Heart right ventricle (tissue), 16 donors: ENCODE measurements at regions of chr9 and their contacts with region 1.

Region 1: GRCh38 chr9:24616863-24617262 is 71.2 kb upstream of the IZUMO3 start:
- DNase-seq: no peak
- ATAC-seq: no peak
- H3K4me3 ChIP-seq: no peak overlapping the region
- H3K27ac ChIP-seq: no peak overlapping the region
- H3K4me1 ChIP-seq: no peaks in the 10 kb centered on the region
- H3K27me3 ChIP-seq: no peaks in the 10 kb centered on the region
- CTCF ChIP-seq: no peak

Region 2: GRCh38 chr9:24561957-24562356 is 54.9 kb before region 1 on chr9:
- intact Hi-C with region 1: loop called in 1 of 10 experiments (anchors 10 kb)
- DNase-seq: no peak
- ATAC-seq: no peak
- H3K4me3 ChIP-seq: no peak overlapping the region
- H3K27ac ChIP-seq: no peak overlapping the region
- H3K4me1 ChIP-seq: no peaks in the 10 kb centered on the region
- H3K27me3 ChIP-seq: no peaks in the 10 kb centered on the region
- CTCF ChIP-seq: no peak

Region 3: DNA sequence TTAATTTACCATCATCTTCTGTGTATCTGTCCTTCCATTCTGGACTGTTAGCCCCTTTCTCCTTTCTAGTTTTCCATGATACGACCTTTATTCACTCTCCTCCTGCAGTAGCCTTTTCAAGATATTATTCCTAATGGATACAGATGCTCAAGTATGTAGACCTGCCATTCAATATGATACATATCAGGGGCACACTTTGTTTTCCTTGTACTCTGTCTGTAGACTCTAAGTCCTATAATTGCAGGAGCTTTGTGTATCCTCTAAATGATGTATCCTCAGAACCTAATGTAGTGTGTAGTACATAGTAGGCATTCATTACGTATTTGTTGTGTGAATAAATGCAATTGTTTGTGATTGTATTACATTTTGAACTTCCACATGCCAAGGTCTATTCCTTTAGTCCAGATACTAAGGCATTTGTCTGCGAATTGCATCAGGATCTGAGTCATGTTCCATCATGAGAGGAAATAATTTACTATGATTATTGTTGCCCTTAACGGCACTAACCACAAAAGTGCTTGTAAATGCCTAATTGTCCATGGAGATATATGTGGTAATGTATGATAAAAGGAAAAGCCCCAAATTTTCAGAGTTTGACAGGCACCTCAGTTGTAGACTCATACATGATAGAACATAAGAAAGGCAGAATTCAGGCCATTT is 14.0 kb before region 1 on chr9:
- intact Hi-C with region 1: loop called in 1 of 10 experiments (anchors 1 kb)
- DNase-seq: no peak
- ATAC-seq: no peak
- H3K4me3 ChIP-seq: no peak overlapping the region
- H3K27ac ChIP-seq: no peak overlapping the region
- H3K4me1 ChIP-seq: no peaks in the 10 kb centered on the region
- H3K27me3 ChIP-seq: no peaks in the 10 kb centered on the region
- CTCF ChIP-seq: no peak